B cell (primary cell): ENCODE measurements at regions of chr2 and their contacts with region 1.

Region 1: GRCh38 chr2:138531913-138532312 is 30.3 kb downstream of the SPOPL start:
- DNase-seq: no peak
- ATAC-seq: no peak
- H3K4me3 ChIP-seq: no peak overlapping the region
- H3K4me3 Mint-ChIP-seq: peak overlapping the region; percentile 26
- H3K27ac ChIP-seq: peak overlapping the region in 1 of 2 donors; percentile 41
- H3K27ac Mint-ChIP-seq: peak overlapping the region; percentile 44
- H3K4me1 ChIP-seq: peaks cover 19 to 58% of the 10 kb centered on the region in 2 donors
- H3K4me1 Mint-ChIP-seq: peaks cover 79% of the 10 kb centered on the region
- H3K27me3 ChIP-seq: no peaks in the 10 kb centered on the region
- H3K27me3 Mint-ChIP-seq: no peaks in the 10 kb centered on the region
- CTCF ChIP-seq: no peak

Region 2: GRCh38 chr2:138486363-138487198 is 45.3 kb before region 1 on chr2:
- CTCF ChIA-PET with region 1: no interaction called
- POLR2A ChIA-PET with region 1: no interaction called
- intact Hi-C with region 1: loop called (anchors 5 kb)
- DNase-seq: no peak
- ATAC-seq: no peak
- H3K4me3 ChIP-seq: no peak overlapping the region
- H3K4me3 Mint-ChIP-seq: no peak overlapping the region
- H3K27ac ChIP-seq: no peak overlapping the region
- H3K27ac Mint-ChIP-seq: no peak overlapping the region
- H3K4me1 ChIP-seq: no peaks in the 10 kb centered on the region
- H3K4me1 Mint-ChIP-seq: no peaks in the 10 kb centered on the region
- H3K27me3 ChIP-seq: no peaks in the 10 kb centered on the region
- H3K27me3 Mint-ChIP-seq: no peaks in the 10 kb centered on the region
- CTCF ChIP-seq: no peak